ENCODE measurements at regions of chr13 and their contacts with region 1.

Region 1: GRCh38 chr13:27977476-27978300 is 8.6 kb upstream of the CDX2 start:
- DNase-seq: peak; percentile 35
- CTCF ChIP-seq: no peak

Region 2: GRCh38 chr13:27374650-27375049 is 603.0 kb before region 1 on chr13:
- in situ Hi-C with region 1: loop called (anchors 10 kb)
- DNase-seq: peak; percentile 77
- CTCF ChIP-seq: peak; percentile 77

Region 3: GRCh38 chr13:27792393-27793218 is 185.1 kb before region 1 on chr13 and contains the start of gene GSX1:
- in situ Hi-C with region 1: loop called (anchors 10 kb)
- DNase-seq: peak; percentile 73
- CTCF ChIP-seq: no peak

Region 4: DNA sequence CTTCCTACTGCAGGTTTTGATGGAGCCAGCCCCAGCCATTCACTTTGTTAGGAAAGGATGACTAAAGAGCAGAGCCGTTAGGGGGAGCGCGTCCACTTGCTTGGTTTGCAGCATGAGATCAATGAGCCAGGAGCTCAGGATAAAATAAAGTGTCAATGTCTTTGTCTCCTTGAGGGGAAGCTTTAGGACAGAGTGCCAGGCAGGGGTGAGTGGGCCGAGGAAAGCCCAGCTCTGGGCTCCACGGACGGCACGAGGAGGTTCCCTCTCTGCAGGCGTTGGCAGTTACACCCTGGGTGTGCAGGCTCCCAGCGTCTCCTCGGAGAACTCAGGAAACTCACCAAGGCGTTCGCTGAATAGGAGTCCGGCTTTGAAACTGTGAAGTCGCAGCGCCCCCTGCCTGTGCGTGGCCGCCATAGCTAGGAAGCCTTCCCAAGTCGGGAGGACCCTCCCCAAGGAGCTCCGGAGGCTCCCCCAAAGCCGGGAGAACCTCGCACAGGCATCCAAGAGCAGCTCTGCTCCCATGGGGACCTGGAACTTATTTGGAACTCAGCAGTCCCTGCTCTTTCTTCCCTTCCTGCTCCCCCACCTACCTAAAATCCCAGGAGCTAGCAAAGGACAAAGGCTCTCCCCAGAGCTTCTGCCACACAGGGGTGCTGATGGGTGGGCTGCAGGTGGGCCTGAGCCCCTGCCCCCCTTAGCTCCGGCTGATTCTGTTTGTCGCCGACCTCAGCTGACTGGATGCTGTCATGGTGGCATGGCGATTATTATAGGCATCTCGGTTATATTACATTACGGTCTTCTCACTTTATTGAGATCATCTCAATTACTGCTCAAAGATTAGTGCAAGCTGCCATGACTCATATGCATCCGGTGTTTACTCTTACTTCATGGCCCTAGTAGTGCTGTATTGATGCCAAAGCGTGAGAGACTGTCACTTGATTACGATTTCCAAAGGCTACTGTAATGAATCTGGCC is 151.0 kb before region 1 on chr13:
- in situ Hi-C with region 1: loop called (anchors 10 kb)
- DNase-seq: peak; percentile 84
- CTCF ChIP-seq: peak; percentile 95

Region 5: DNA sequence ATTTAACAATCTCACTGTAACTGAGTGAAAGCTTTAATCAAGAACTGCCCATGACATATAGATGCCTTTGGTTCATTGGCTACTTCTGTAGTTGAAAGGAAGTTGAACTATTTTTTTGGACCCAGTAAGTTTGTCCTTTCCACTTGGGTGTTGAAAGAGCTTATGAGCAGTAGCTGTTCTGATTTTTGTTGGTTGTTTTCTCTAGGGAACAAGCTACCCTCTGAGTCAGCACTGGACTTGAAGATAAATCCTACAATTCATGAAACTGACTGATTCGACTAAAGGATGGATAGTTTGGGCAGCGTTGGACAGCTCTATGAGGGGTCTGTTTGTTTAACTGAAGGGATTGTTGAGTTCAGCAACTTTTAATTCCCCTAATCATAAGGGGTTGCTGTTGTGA is 261.7 kb after region 1 on chr13:
- in situ Hi-C with region 1: no loop called
- DNase-seq: no peak
- CTCF ChIP-seq: no peak

Measured in GM13977 (cell line).